Colonic mucosa (tissue), 4 donors: ENCODE measurements at regions of chr10 and their contacts with region 1.

Region 1: GRCh38 chr10:126803206-126803793 is 101.9 kb upstream of the DOCK1 start:
- DNase-seq: no peak
- H3K4me3 ChIP-seq: no peak overlapping the region
- H3K27ac ChIP-seq: no peak overlapping the region
- H3K4me1 ChIP-seq: no peaks in the 10 kb centered on the region
- H3K27me3 ChIP-seq: no peaks in the 10 kb centered on the region
- CTCF ChIP-seq: no peak

Region 2: DNA sequence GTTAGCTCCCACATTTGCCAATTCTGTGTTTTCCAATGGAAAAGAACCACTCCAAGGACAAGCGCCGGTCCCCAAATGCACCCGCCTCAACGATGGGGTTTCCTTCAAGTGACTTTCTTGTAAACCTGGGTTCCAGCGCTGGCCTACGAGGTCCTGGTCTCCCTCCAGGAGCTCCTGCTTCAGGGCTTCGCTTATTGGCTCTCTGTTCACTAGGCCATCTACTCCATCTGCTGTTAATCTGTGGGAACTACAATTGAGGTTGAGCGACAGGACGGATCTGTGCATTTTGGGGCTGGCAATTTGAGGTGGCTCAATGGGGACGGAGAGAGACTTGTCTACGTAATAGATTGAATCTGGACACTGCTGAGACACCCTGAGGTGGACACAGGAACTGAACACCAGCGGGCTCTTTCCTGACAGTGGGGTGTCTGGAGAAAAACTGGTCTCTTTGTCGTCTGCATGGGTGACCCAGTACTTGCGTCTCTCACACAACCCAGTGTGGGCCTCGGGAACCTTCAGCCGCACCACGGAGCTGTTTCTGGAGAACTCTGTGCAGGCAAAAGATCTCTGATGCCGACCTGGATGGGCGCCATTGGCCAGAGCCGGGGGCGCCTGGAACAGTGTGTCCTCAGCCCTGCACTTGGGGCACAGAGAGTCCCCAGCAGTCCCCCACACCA is 299.1 kb before region 1 on chr10:
- intact Hi-C with region 1: no loop called
- DNase-seq: peak; percentile 24
- H3K4me3 ChIP-seq: no peak overlapping the region
- H3K27ac ChIP-seq: no peak overlapping the region
- H3K4me1 ChIP-seq: no peaks in the 10 kb centered on the region
- H3K27me3 ChIP-seq: no peaks in the 10 kb centered on the region
- CTCF ChIP-seq: peak; percentile 56

Region 3: DNA sequence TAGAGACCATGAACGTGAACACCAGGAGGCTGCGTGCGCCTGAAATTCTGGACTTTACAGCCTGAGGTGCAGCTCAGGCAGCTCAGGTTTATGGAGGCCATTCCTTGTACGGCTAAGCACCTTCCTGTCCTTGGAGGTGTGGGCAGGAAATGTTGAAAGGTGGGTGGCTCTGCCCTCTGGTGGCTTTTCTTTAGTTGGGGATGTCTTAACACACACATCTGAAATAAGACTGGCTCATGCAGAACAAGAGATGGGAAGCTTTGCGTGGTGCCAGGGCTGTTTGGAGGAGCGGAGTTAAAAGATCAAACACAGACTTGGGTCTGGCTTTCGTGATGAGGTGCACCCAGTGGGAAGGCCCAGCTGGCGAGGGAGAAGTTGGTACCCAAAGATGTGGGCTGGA is 166.0 kb after region 1 on chr10:
- intact Hi-C with region 1: loop called (anchors 10 kb)
- DNase-seq: peak; percentile 29
- H3K4me3 ChIP-seq: no peak overlapping the region
- H3K27ac ChIP-seq: no peak overlapping the region
- H3K4me1 ChIP-seq: no peaks in the 10 kb centered on the region
- H3K27me3 ChIP-seq: no peaks in the 10 kb centered on the region
- CTCF ChIP-seq: no peak